ENCODE measurements at regions of chr6 and their contacts with region 1.

Region 1: DNA sequence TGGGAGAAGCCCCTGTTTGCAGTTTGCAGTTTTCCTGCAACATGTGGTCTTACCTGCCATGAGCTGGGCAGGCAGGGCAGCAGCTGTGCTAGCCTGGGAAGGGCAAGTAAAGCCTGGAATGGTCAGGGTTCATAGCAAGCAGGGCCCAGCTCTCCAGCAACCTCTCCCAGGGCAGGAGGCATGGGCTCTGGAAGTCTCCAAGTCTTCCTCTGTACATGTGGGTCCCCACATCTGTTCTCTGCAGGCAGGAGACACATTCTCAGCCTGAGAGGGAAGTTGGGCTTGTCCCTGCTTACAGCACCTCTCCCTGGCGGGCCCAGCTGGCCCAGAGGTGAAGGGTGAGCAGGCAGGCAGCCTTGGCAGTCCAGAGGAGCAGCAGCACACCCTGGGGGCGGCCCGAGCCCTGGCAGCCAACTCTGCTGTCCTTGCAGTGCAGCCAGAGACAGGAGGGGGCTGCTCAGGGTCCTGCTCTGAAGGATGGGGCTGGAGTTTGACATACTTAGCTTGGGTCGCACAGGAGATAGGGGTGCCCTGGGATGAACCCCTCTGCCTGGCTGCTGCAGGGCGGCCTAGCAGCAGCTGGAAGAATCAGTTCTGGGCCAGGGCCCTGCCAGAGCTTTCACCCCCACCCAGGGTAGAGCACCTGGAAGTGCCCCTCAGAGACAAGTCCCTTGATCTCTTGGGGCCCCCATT is 176.0 kb downstream of the MRPL14 start:
- DNase-seq: peak; percentile 73
- ATAC-seq: peak; percentile 95
- H3K4me3 ChIP-seq: peak overlapping the region in 1 of 3 experiments; percentile 20; a peak in 1 of 6 replicates
- H3K27ac ChIP-seq: no peak overlapping the region
- H3K4me1 ChIP-seq: peaks cover 71% of the 10 kb centered on the region
- H3K27me3 ChIP-seq: peaks cover 0 to 2% of the 10 kb centered on the region in 2 experiments; a peak in 1 of 5 replicates
- CTCF ChIP-seq: peak; percentile 100
- EP300 ChIP-seq: peak in 1 of 2 experiments; percentile 32; a peak in 1 of 4 replicates
- POLR2A ChIP-seq: no peak
- RAD21 ChIP-seq: peak; percentile 100

Region 2: DNA sequence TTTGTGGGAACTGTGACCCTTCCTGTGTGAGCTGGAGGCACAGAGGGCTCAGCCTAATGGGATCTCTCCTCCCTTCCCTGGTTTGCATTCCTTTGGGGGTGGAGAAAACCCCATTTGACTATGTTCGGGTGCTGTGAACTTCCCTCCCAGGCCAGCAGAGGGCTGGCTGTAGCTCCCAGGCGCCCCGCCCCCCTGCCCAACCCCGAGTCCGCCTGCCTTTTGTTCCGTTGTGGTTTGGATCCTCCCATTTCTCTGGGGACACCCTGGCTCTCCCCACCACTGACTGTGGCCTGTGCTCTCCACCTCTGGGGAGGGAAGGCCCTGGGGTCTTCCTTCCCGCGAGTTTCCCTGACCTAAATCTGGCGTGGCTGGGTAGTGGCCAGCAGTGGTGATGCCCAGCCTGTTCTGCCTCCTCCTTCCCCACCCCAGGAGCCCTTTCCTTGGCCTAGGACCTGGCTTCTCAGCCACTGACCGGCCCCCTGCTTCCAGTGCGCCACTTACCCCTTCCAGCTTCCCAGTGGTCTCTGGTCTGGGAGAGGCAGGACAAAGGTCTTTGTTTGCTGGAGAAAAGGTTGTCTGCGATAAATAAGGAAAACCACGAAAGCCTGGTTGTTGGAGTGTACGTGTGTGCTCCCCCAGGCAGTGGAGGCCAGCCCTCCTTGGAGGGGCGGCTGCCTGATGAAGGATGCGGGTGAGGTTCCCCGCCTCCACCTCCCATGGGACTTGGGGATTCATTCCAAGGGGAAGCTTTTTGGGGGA is 176.3 kb before region 1 on chr6:
- CTCF ChIA-PET with region 1: interaction called, 33 read pairs
- POLR2A ChIA-PET with region 1: interaction called, 59 read pairs
- in situ Hi-C with region 1: loop called (anchors 5 kb)
- intact Hi-C with region 1: loop called (anchors 1 kb)
- DNase-seq: peak; percentile 62
- ATAC-seq: peak; percentile 20
- H3K4me3 ChIP-seq: peak overlapping the region; percentile 90 to 98 (median 95)
- H3K27ac ChIP-seq: peak overlapping the region; percentile 86
- H3K4me1 ChIP-seq: peaks cover 37% of the 10 kb centered on the region
- H3K27me3 ChIP-seq: no peaks in the 10 kb centered on the region; a peak in 1 of 5 replicates
- CTCF ChIP-seq: peak; percentile 92
- EP300 ChIP-seq: no peak
- POLR2A ChIP-seq: no peak
- RAD21 ChIP-seq: peak; percentile 82

Region 3: GRCh38 chr6:43838276-43839036 is 112.8 kb before region 1 on chr6:
- CTCF ChIA-PET with region 1: interaction called, 3 read pairs
- POLR2A ChIA-PET with region 1: no interaction called
- in situ Hi-C with region 1: no loop called
- intact Hi-C with region 1: loop called (anchors 5 kb)
- DNase-seq: peak; percentile 41
- ATAC-seq: peak; percentile 63
- H3K4me3 ChIP-seq: peak overlapping the region in 1 of 3 experiments; percentile 34; a peak in 1 of 6 replicates
- H3K27ac ChIP-seq: no peak overlapping the region
- H3K4me1 ChIP-seq: peaks cover 69% of the 10 kb centered on the region
- H3K27me3 ChIP-seq: peaks cover 9 to 46% of the 10 kb centered on the region in 2 experiments
- CTCF ChIP-seq: peak; percentile 74
- EP300 ChIP-seq: 0 out of 4 replicates have a peak, but pooled peaks of 1 of the 2 experiments have one; percentile 2
- POLR2A ChIP-seq: no peak
- RAD21 ChIP-seq: peak; percentile 75

Region 4: GRCh38 chr6:43910638-43911353 is 40.4 kb before region 1 on chr6:
- CTCF ChIA-PET with region 1: no interaction called
- POLR2A ChIA-PET with region 1: no interaction called
- in situ Hi-C with region 1: no loop called
- intact Hi-C with region 1: loop called (anchors 5 kb)
- DNase-seq: no peak
- ATAC-seq: no peak
- H3K4me3 ChIP-seq: peak overlapping the region in 2 of 3 experiments; percentile 1 to 51; a peak in 1 of 6 replicates
- H3K27ac ChIP-seq: no peak overlapping the region
- H3K4me1 ChIP-seq: peaks cover 77% of the 10 kb centered on the region
- H3K27me3 ChIP-seq: no peaks in the 10 kb centered on the region
- CTCF ChIP-seq: no peak
- EP300 ChIP-seq: no peak; a peak in 1 of 4 replicates
- POLR2A ChIP-seq: no peak
- RAD21 ChIP-seq: no peak

Measured in HepG2 (cell line).